ENCODE measurements at regions of chr15 and their contacts with region 1.

Region 1: GRCh38 chr15:65792130-65792987 is at the start of gene DENND4A:
- DNase-seq: peak; percentile 98 to 99
- ATAC-seq: peak; percentile 80 to 95 (median 83)
- H3K4me3 ChIP-seq: peak within 1 kb of the TSS; percentile 97
- H3K4me3 Mint-ChIP-seq: peak within 1 kb of the TSS; percentile 96
- H3K27ac ChIP-seq: peak within 1 kb of the TSS; percentile 96
- H3K27ac Mint-ChIP-seq: peak within 1 kb of the TSS; percentile 98 to 100
- H3K4me1 ChIP-seq: peaks cover 16% of the 10 kb centered on the region
- H3K4me1 Mint-ChIP-seq: peaks cover 38 to 39% of the 10 kb centered on the region in 2 donors
- H3K27me3 ChIP-seq: no peaks in the 10 kb centered on the region
- H3K27me3 Mint-ChIP-seq: no peaks in the 10 kb centered on the region
- CTCF ChIP-seq: no peak
- total RNA-seq, gene DENND4A: 65.8 to 84.6 (median 66.1) TPM

Region 2: GRCh38 chr15:65804252-65804931 is 12.0 kb after region 1 on chr15:
- intact Hi-C with region 1: loop called (anchors 1 kb)
- DNase-seq: no peak
- ATAC-seq: peak; percentile 55 to 75 (median 58)
- H3K4me3 ChIP-seq: no peak overlapping the region
- H3K4me3 Mint-ChIP-seq: no peak overlapping the region
- H3K27ac ChIP-seq: peak overlapping the region; percentile 66
- H3K27ac Mint-ChIP-seq: peak overlapping the region; percentile 81 to 95
- H3K4me1 ChIP-seq: peaks cover 31% of the 10 kb centered on the region
- H3K4me1 Mint-ChIP-seq: peaks cover 33 to 35% of the 10 kb centered on the region in 2 donors
- H3K27me3 ChIP-seq: no peaks in the 10 kb centered on the region
- H3K27me3 Mint-ChIP-seq: no peaks in the 10 kb centered on the region
- CTCF ChIP-seq: no peak

Region 3: GRCh38 chr15:65818927-65819562 is 26.7 kb after region 1 on chr15:
- intact Hi-C with region 1: loop called (anchors 1 kb)
- DNase-seq: peak in 1 of 2 donors; percentile 90
- ATAC-seq: peak; percentile 82 to 93 (median 93)
- H3K4me3 ChIP-seq: peak overlapping the region; percentile 12
- H3K4me3 Mint-ChIP-seq: peak overlapping the region; percentile 89
- H3K27ac ChIP-seq: peak overlapping the region; percentile 96
- H3K27ac Mint-ChIP-seq: peak overlapping the region; percentile 96 to 100
- H3K4me1 ChIP-seq: peaks cover 49% of the 10 kb centered on the region
- H3K4me1 Mint-ChIP-seq: peaks cover 49% of the 10 kb centered on the region in 2 donors
- H3K27me3 ChIP-seq: no peaks in the 10 kb centered on the region
- H3K27me3 Mint-ChIP-seq: no peaks in the 10 kb centered on the region
- CTCF ChIP-seq: no peak

Region 4: GRCh38 chr15:65832549-65833364 is 40.4 kb after region 1 on chr15:
- intact Hi-C with region 1: loop called (anchors 2 kb)
- DNase-seq: peak; percentile 41 to 78
- ATAC-seq: peak; percentile 71 to 76 (median 75)
- H3K4me3 ChIP-seq: no peak overlapping the region
- H3K4me3 Mint-ChIP-seq: peak overlapping the region; percentile 86
- H3K27ac ChIP-seq: peak overlapping the region; percentile 87
- H3K27ac Mint-ChIP-seq: peak overlapping the region; percentile 97 to 98
- H3K4me1 ChIP-seq: peaks cover 51% of the 10 kb centered on the region
- H3K4me1 Mint-ChIP-seq: peaks cover 44 to 52% of the 10 kb centered on the region in 2 donors
- H3K27me3 ChIP-seq: no peaks in the 10 kb centered on the region
- H3K27me3 Mint-ChIP-seq: no peaks in the 10 kb centered on the region
- CTCF ChIP-seq: no peak

Region 5: DNA sequence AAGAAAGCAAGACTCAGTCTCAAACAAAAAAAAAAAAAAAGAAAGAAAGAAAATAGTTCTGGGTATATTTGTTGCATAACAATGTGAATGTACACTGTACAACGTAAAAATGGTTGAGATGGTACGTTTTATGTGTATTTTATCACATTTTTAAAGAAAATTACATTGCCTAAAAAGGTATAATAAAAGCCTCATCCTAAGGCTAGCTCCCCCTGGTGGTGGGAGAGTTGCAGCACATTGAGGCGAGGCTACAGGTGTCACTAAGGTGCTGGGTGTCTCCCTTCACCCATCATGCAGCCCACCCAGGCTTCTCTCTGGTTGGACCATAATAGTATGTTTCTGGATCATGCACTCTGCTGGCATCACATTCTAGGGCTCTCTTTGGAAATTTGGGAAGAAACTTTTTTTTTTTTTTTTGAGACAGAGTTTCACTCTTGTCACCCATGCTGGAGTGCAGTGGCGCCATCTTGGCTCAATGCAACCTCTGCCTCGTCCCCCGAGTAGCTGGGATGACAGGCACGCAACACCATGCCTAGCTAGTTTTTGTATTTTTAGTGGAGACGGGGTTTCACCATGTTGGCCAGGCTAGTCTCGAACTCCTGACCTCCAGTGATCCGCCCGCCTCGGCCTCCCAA is 64.6 kb after region 1 on chr15:
- intact Hi-C with region 1: loop called (anchors 5 kb)
- DNase-seq: peak; percentile 55 to 93
- ATAC-seq: peak; percentile 37 to 71 (median 70)
- H3K4me3 ChIP-seq: no peak overlapping the region
- H3K4me3 Mint-ChIP-seq: no peak overlapping the region
- H3K27ac ChIP-seq: no peak overlapping the region
- H3K27ac Mint-ChIP-seq: peak overlapping the region in 1 of 2 donors; percentile 32
- H3K4me1 ChIP-seq: peaks cover 7% of the 10 kb centered on the region
- H3K4me1 Mint-ChIP-seq: peaks cover 19 to 24% of the 10 kb centered on the region in 2 donors
- H3K27me3 ChIP-seq: no peaks in the 10 kb centered on the region
- H3K27me3 Mint-ChIP-seq: no peaks in the 10 kb centered on the region
- CTCF ChIP-seq: peak; percentile 86

Region 6: DNA sequence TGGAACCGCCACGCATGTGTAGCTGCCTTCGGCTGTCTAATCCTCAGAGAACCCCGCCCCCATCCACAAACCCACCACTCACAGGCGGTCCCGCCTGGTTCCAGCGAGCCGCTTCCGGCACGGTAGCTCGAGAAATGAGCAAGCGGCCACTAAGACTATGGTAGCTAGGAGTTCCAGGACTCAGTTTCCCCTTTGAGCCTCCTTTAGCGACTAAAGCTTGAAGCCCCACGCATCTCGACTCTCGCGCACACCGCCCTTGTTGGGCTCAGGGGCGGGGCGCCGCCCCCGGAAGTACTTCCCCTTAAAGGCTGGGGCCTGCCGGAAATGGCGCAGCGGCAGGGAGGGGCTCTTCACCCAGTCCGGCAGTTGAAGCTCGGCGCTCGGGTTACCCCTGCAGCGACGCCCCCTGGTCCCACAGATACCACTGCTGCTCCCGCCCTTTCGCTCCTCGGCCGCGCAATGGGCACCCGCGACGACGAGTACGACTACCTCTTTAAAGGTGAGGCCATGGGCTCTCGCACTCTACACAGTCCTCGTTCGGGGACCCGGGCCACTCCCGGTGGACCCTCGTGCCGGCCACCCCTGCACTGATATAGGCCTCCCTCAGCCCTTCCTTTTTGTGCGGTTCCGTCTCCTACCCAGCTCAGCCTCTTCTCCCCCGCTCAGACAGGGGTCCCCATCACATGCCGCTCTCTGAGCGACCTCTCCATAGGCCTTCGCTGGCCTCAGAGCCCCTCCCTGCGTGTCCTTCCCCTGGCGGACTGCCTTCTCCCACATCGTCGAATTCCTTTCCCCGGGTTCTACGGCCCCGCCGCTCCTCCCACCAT is 77.0 kb after region 1 on chr15 and contains the start of gene RAB11A:
- intact Hi-C with region 1: loop called (anchors 2 kb)
- DNase-seq: peak; percentile 94 to 98
- ATAC-seq: peak; percentile 90 to 98 (median 93)
- H3K4me3 ChIP-seq: peak within 1 kb of the TSS; percentile 85
- H3K4me3 Mint-ChIP-seq: peak within 1 kb of the TSS; percentile 99
- H3K27ac ChIP-seq: peak within 1 kb of the TSS; percentile 82
- H3K27ac Mint-ChIP-seq: peak within 1 kb of the TSS; percentile 98 to 100
- H3K4me1 ChIP-seq: peaks cover 11% of the 10 kb centered on the region
- H3K4me1 Mint-ChIP-seq: peaks cover 31 to 40% of the 10 kb centered on the region in 2 donors
- H3K27me3 ChIP-seq: no peaks in the 10 kb centered on the region
- H3K27me3 Mint-ChIP-seq: no peaks in the 10 kb centered on the region
- CTCF ChIP-seq: peak; percentile 61
- total RNA-seq, gene RAB11A: 84.7 to 97.1 (median 87.5) TPM

Region 7: GRCh38 chr15:65887565-65887964 is 95.2 kb after region 1 on chr15:
- intact Hi-C with region 1: no loop called
- DNase-seq: peak in 1 of 2 donors; percentile 78
- ATAC-seq: peak in 2 of 3 donors; percentile 36 to 50
- H3K4me3 ChIP-seq: no peak overlapping the region
- H3K4me3 Mint-ChIP-seq: no peak overlapping the region
- H3K27ac ChIP-seq: no peak overlapping the region
- H3K27ac Mint-ChIP-seq: peak overlapping the region; percentile 64 to 70
- H3K4me1 ChIP-seq: peaks cover 3% of the 10 kb centered on the region
- H3K4me1 Mint-ChIP-seq: peaks cover 21 to 41% of the 10 kb centered on the region in 2 donors
- H3K27me3 ChIP-seq: no peaks in the 10 kb centered on the region
- H3K27me3 Mint-ChIP-seq: no peaks in the 10 kb centered on the region
- CTCF ChIP-seq: no peak